ENCODE measurements at regions of chr13 and their contacts with region 1.

Region 1: DNA sequence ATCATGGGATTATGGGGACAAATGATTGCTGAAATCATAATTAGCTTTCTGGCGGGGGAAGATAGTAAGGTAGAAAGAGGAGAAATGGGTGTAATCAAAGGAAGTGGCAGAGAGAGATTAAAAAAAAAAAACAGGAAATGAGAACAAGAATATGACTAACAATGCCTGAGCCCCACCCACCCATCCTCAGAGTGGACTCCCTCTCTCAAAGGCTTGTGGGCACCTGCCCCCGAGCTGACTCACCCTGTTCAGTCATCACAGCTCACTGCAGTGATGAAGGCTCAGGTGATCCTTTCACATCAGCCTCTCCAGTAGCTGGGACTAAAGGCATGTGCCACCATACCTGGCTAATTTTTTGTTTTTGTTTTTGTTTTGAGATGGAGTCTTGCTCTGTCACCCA is 26.4 kb upstream of the TPT1 start:
- DNase-seq: peak; percentile 85 to 99 (median 92)
- H3K4me3 ChIP-seq: no peak overlapping the region
- H3K4me3 Mint-ChIP-seq: peak overlapping the region; percentile 35 to 79 (median 64)
- H3K27ac ChIP-seq: peak overlapping the region; percentile 50
- H3K27ac Mint-ChIP-seq: peak overlapping the region; percentile 93 to 97 (median 93)
- H3K4me1 ChIP-seq: peaks cover 42% of the 10 kb centered on the region
- H3K4me1 Mint-ChIP-seq: peaks cover 35 to 62% (median 49%) of the 10 kb centered on the region in 4 donors
- H3K27me3 ChIP-seq: no peaks in the 10 kb centered on the region
- H3K27me3 Mint-ChIP-seq: no peaks in the 10 kb centered on the region

Region 2: GRCh38 chr13:45047394-45048310 is 319.7 kb before region 1 on chr13:
- CTCF ChIA-PET with region 1: interaction called, 14 read pairs
- POLR2A ChIA-PET with region 1: interaction called, 6 read pairs
- intact Hi-C with region 1: no loop called
- DNase-seq: peak; percentile 68 to 74 (median 72)
- H3K4me3 ChIP-seq: peak overlapping the region in 1 of 2 donors; percentile 31
- H3K4me3 Mint-ChIP-seq: peak overlapping the region; percentile 63 to 87 (median 80)
- H3K27ac ChIP-seq: no peak overlapping the region
- H3K27ac Mint-ChIP-seq: peak overlapping the region in 4 of 7 donors; percentile 20 to 86 (median 47)
- H3K4me1 ChIP-seq: peaks cover 16% of the 10 kb centered on the region
- H3K4me1 Mint-ChIP-seq: peaks cover 9 to 14% (median 10%) of the 10 kb centered on the region in 4 donors
- H3K27me3 ChIP-seq: no peaks in the 10 kb centered on the region
- H3K27me3 Mint-ChIP-seq: peaks cover 5 to 16% of the 10 kb centered on the region in 2 donors

Region 3: DNA sequence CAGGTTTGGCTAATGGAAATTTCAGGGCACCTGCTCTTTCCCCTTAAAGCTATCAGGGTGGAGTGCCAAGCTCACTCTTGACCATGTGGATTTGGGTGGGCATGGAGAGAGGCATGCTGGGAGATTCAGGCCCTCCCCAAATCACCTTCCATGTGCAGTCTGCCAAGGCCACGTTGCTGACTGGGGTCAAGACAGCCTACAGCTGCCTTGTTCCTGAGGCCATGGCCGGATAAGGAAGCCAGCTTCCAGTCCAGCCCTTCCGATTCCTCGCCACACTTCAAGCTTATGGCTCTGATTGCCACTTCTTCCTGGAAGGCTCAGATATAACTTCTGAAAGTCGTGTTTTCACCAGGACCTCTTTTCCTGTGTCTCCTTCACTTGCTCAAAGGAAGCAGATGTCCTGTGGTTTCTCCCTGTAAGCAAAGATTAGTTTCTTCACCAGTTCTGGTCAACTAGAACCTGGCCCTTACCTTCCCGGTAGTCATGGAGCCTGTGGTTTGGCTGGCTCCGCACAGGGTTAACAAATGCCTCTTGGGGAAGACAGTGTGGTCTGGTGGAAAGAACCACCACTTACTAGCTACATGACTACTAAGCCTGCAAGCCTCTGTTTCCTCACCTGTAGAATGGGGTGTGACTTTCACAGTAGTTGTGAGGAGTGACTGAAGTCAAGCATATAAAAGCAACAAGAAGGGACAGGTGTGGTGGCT is 10.2 kb before region 1 on chr13:
- CTCF ChIA-PET with region 1: interaction called, 13 read pairs
- POLR2A ChIA-PET with region 1: interaction called, 27 read pairs
- intact Hi-C with region 1: no loop called
- DNase-seq: no peak
- H3K4me3 ChIP-seq: no peak overlapping the region
- H3K4me3 Mint-ChIP-seq: peak overlapping the region in 1 of 8 donors; percentile 17
- H3K27ac ChIP-seq: no peak overlapping the region
- H3K27ac Mint-ChIP-seq: peak overlapping the region in 6 of 7 donors; percentile 10 to 90 (median 74)
- H3K4me1 ChIP-seq: no peaks in the 10 kb centered on the region
- H3K4me1 Mint-ChIP-seq: peaks cover 6 to 22% (median 12%) of the 10 kb centered on the region in 4 donors
- H3K27me3 ChIP-seq: no peaks in the 10 kb centered on the region
- H3K27me3 Mint-ChIP-seq: no peaks in the 10 kb centered on the region

Region 4: DNA sequence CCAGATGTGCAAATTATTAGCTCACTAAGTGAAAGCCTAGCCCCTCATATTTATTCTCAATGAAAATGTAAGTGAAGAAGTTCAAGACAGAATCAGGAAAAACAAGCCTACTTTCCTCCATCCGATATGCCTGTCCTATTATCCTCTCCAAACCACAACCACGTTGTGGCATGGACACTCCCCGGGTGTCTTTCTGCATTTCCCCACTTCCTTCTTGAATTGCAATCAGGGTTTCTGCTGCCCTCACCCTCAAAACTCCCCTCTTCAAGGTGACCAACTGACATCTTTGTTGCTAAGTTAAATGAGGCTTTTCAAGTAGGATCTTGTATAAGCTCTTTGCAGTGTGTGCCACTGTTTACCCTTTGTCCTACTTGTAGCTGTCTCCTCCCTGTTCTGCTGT is 39.1 kb after region 1 on chr13:
- CTCF ChIA-PET with region 1: interaction called, 25 read pairs
- POLR2A ChIA-PET with region 1: interaction called, 4 read pairs
- intact Hi-C with region 1: no loop called
- DNase-seq: no peak
- H3K4me3 ChIP-seq: no peak overlapping the region
- H3K4me3 Mint-ChIP-seq: no peak overlapping the region
- H3K27ac ChIP-seq: no peak overlapping the region
- H3K27ac Mint-ChIP-seq: peak overlapping the region in 5 of 7 donors; percentile 7 to 93 (median 80)
- H3K4me1 ChIP-seq: no peaks in the 10 kb centered on the region
- H3K4me1 Mint-ChIP-seq: peaks cover 6 to 30% (median 14%) of the 10 kb centered on the region in 4 donors
- H3K27me3 ChIP-seq: no peaks in the 10 kb centered on the region
- H3K27me3 Mint-ChIP-seq: no peaks in the 10 kb centered on the region

Region 5: GRCh38 chr13:45451282-45451681 is 83.9 kb after region 1 on chr13:
- CTCF ChIA-PET with region 1: interaction called, 11 read pairs
- POLR2A ChIA-PET with region 1: no interaction called
- intact Hi-C with region 1: no loop called
- DNase-seq: no peak
- H3K4me3 ChIP-seq: no peak overlapping the region
- H3K4me3 Mint-ChIP-seq: no peak overlapping the region
- H3K27ac ChIP-seq: no peak overlapping the region
- H3K27ac Mint-ChIP-seq: no peak overlapping the region
- H3K4me1 ChIP-seq: no peaks in the 10 kb centered on the region
- H3K4me1 Mint-ChIP-seq: peaks cover 0 to 3% (median 0%) of the 10 kb centered on the region in 4 donors
- H3K27me3 ChIP-seq: no peaks in the 10 kb centered on the region
- H3K27me3 Mint-ChIP-seq: peaks cover 0 to 5% of the 10 kb centered on the region in 2 donors

Region 6: DNA sequence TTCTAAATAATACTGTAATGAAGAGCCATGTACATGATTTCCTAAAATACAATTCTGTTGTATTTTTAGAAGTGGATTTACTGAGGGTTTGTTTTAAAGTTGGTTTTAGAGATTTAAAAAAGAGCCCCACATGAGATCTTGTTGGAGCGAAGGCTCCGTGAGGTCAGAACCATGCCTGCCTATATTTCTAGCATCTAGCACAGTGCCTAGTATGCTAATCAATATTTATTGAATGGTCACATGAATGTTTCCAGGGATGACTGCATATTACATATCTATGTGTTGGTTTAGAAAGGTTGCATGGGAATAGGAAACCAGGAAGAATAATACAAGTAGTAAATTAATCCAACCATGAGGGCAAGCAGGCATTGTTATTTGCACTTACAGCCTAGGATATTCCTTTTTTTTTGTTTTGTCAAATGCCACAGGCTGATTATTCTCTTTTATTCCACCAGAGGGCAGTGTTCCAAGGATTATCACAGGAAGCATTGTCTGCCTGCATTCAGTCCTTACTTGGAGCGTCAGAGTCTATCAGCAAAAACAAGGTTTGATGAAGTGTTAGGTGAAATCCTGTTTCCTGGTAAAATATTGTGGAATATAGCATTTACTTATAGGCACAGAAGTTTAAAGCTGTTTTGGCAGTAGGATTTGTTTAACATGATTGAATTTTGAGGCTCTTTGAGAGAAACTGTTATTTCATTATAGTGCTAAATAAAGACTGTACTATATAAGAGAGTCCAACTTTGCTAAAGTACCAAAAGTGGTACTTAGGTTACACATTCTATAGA is 144.1 kb after region 1 on chr13:
- CTCF ChIA-PET with region 1: interaction called, 13 read pairs
- POLR2A ChIA-PET with region 1: no interaction called
- intact Hi-C with region 1: loop called (anchors 1 kb)
- DNase-seq: peak in 4 of 5 donors; percentile 55 to 68 (median 62)
- H3K4me3 ChIP-seq: no peak overlapping the region
- H3K4me3 Mint-ChIP-seq: no peak overlapping the region
- H3K27ac ChIP-seq: no peak overlapping the region
- H3K27ac Mint-ChIP-seq: peak overlapping the region; percentile 6 to 89 (median 59)
- H3K4me1 ChIP-seq: peaks cover 3% of the 10 kb centered on the region
- H3K4me1 Mint-ChIP-seq: peaks cover 4 to 11% (median 9%) of the 10 kb centered on the region in 4 donors
- H3K27me3 ChIP-seq: no peaks in the 10 kb centered on the region
- H3K27me3 Mint-ChIP-seq: no peaks in the 10 kb centered on the region

Region 7: DNA sequence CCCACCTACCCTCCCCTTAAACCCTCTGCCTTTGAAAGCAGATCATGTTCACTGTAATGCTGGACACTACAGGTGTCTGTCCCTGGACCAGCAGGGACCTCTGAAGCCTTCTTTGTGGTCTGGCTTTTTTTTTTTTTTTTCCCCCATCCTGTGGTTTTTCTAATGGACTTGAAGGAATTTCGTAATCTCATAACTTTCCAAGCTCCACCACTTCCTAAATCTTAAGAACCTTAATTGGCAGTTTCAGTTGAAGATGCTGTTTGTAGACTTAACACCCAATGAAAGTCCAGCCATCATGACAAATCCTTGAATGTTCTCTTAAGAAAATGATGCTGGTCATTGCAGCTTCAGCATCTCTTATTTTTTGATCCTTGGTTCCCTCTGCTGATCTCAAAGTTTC is 1140.6 kb after region 1 on chr13:
- CTCF ChIA-PET with region 1: no interaction called
- POLR2A ChIA-PET with region 1: no interaction called
- intact Hi-C with region 1: no loop called
- DNase-seq: no peak
- H3K4me3 ChIP-seq: no peak overlapping the region
- H3K4me3 Mint-ChIP-seq: no peak overlapping the region
- H3K27ac ChIP-seq: no peak overlapping the region
- H3K27ac Mint-ChIP-seq: no peak overlapping the region
- H3K4me1 ChIP-seq: no peaks in the 10 kb centered on the region
- H3K4me1 Mint-ChIP-seq: no peaks in the 10 kb centered on the region
- H3K27me3 ChIP-seq: no peaks in the 10 kb centered on the region
- H3K27me3 Mint-ChIP-seq: peaks cover 7 to 9% of the 10 kb centered on the region in 2 donors

Measured in CD4-positive, alpha-beta memory T cell (primary cell).